CD8-positive, alpha-beta T cell (primary cell): ENCODE measurements at regions of chr2 and their contacts with region 1.

Region 1: GRCh38 chr2:84970868-84971509 is at the start of gene KCMF1:
- DNase-seq: peak; percentile 26 to 80 (median 69)
- ATAC-seq: peak; percentile 52
- H3K4me3 ChIP-seq: peak within 1 kb of the TSS; percentile 66 to 75
- H3K4me3 Mint-ChIP-seq: peak within 1 kb of the TSS; percentile 92
- H3K27ac ChIP-seq: peak within 1 kb of the TSS; percentile 74 to 78
- H3K27ac Mint-ChIP-seq: peak within 1 kb of the TSS; percentile 97
- H3K4me1 ChIP-seq: peaks cover 51% of the 10 kb centered on the region
- H3K4me1 Mint-ChIP-seq: peaks cover 61% of the 10 kb centered on the region
- H3K27me3 ChIP-seq: no peaks in the 10 kb centered on the region
- H3K27me3 Mint-ChIP-seq: no peaks in the 10 kb centered on the region
- CTCF ChIP-seq: no peak
- total RNA-seq, gene KCMF1: 85.3 to 89.5 TPM

Region 2: DNA sequence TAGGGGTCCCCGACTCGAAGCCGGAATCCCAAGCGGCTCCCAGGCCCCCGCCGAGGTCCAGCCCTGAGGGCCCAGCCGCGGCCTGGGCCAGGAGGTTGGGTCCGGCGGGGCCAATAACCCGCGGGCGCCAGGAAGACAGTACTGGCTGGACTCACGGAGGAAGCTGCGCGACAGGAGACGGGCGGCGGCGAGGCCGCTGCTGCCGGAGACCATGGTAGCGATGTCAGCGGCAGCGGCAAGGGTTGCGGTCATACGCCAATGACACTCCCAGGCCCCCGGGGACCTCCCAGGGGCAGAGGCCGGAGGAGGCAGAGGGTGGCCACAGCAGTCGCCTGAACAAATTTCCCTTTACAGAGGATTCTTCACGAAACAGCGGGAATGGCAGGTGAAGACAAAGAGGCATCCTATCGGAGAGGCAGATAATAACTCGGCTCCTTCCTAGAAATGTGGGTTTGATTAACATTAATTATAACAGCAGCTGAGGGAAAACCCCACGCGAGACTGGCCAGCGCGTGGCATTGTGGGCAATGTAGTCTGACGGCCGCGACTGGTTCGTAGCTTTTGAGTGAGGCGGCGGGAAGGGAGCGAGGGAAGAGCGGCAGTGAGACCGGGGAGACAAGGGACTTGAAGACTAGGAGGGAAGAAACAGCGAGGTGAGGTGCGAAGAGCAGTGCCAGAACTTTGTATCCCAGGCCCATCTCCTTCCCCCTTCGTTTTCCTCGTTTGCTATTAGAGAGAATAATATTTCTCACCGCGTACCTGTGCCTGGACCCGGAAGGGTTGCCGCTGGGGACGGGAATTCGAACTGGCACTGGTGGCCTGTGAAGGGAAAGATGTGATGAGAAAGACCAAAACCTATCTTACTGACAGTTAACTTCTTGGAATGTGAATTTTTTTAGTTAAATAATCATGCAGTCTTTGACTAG is 511.7 kb before region 1 on chr2 and contains the start of gene SUCLG1:
- CTCF ChIA-PET with region 1: no interaction called
- POLR2A ChIA-PET with region 1: no interaction called
- intact Hi-C with region 1: loop called in 1 of 2 experiments (anchors 1 kb)
- DNase-seq: peak; percentile 72 to 94 (median 87)
- ATAC-seq: peak; percentile 96
- H3K4me3 ChIP-seq: peak within 1 kb of the TSS; percentile 81 to 95
- H3K4me3 Mint-ChIP-seq: peak within 1 kb of the TSS; percentile 98
- H3K27ac ChIP-seq: peak within 1 kb of the TSS; percentile 78 to 97
- H3K27ac Mint-ChIP-seq: peak within 1 kb of the TSS; percentile 98
- H3K4me1 ChIP-seq: peaks cover 30% of the 10 kb centered on the region
- H3K4me1 Mint-ChIP-seq: peaks cover 46% of the 10 kb centered on the region
- H3K27me3 ChIP-seq: no peaks in the 10 kb centered on the region
- H3K27me3 Mint-ChIP-seq: no peaks in the 10 kb centered on the region
- CTCF ChIP-seq: no peak
- total RNA-seq, gene SUCLG1: 31.6 to 35.1 TPM

Region 3: GRCh38 chr2:84792856-84793522 is 178.0 kb before region 1 on chr2:
- CTCF ChIA-PET with region 1: no interaction called
- POLR2A ChIA-PET with region 1: no interaction called
- intact Hi-C with region 1: no loop called
- DNase-seq: no peak
- ATAC-seq: no peak
- H3K4me3 ChIP-seq: no peak overlapping the region
- H3K4me3 Mint-ChIP-seq: no peak overlapping the region
- H3K27ac ChIP-seq: no peak overlapping the region
- H3K27ac Mint-ChIP-seq: no peak overlapping the region
- H3K4me1 ChIP-seq: no peaks in the 10 kb centered on the region
- H3K4me1 Mint-ChIP-seq: peaks cover 9% of the 10 kb centered on the region
- H3K27me3 ChIP-seq: no peaks in the 10 kb centered on the region
- H3K27me3 Mint-ChIP-seq: no peaks in the 10 kb centered on the region
- CTCF ChIP-seq: no peak

Region 4: DNA sequence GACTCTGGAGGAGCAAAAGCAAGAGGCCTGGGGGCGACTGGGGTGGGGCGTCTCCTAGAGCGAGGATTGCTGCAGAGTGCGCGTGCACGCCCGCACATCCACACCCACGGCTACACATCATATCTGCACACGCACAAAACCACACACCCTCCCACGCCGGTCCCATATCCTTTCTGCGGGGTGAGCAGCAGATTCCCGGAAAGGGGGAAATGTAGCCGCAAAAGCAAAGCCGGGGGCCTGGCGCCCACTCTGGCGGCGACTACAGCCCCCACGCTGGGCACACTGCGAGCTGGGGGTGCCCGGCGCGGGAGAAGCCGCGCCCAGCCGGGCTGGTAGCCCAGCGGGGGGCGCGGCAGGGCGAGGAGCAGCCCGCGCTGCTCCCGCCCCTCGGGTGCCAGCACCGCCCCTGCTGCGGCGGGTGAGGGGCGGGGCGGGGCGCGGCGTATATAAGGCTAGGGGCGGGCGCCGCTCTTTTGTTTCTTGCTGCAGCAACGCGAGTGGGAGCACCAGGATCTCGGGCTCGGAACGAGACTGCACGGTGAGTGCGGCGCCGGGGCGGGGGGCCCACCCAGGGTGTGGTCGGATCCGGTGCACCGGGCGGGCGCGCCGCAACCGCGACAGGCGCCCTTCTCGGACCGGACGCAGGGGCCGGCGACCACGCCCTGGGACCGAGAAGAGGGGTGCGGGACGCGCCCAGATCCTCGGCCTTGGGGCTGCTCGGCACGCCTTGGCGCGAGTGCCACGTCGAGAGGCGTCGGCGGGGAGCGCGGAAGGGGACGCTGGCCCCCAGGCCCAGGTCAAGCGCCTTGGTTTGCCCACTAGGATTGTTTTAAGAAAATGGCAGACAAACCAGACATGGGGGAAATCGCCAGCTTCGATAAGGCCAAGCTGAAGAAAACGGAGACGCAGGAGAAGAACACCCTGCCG is 65.5 kb before region 1 on chr2 and contains the start of gene TMSB10:
- CTCF ChIA-PET with region 1: no interaction called
- POLR2A ChIA-PET with region 1: interaction called, 11 read pairs
- intact Hi-C with region 1: loop called in 1 of 2 experiments (anchors 2 kb)
- DNase-seq: peak; percentile 84 to 97 (median 91)
- ATAC-seq: peak; percentile 80
- H3K4me3 ChIP-seq: peak within 1 kb of the TSS; percentile 85 to 91
- H3K4me3 Mint-ChIP-seq: peak within 1 kb of the TSS; percentile 92
- H3K27ac ChIP-seq: peak within 1 kb of the TSS; percentile 68 to 80
- H3K27ac Mint-ChIP-seq: peak within 1 kb of the TSS; percentile 90
- H3K4me1 ChIP-seq: peaks cover 39% of the 10 kb centered on the region
- H3K4me1 Mint-ChIP-seq: peaks cover 59% of the 10 kb centered on the region
- H3K27me3 ChIP-seq: no peaks in the 10 kb centered on the region
- H3K27me3 Mint-ChIP-seq: no peaks in the 10 kb centered on the region
- CTCF ChIP-seq: no peak
- total RNA-seq, gene TMSB10: 1,479 to 1,577 TPM

Region 5: DNA sequence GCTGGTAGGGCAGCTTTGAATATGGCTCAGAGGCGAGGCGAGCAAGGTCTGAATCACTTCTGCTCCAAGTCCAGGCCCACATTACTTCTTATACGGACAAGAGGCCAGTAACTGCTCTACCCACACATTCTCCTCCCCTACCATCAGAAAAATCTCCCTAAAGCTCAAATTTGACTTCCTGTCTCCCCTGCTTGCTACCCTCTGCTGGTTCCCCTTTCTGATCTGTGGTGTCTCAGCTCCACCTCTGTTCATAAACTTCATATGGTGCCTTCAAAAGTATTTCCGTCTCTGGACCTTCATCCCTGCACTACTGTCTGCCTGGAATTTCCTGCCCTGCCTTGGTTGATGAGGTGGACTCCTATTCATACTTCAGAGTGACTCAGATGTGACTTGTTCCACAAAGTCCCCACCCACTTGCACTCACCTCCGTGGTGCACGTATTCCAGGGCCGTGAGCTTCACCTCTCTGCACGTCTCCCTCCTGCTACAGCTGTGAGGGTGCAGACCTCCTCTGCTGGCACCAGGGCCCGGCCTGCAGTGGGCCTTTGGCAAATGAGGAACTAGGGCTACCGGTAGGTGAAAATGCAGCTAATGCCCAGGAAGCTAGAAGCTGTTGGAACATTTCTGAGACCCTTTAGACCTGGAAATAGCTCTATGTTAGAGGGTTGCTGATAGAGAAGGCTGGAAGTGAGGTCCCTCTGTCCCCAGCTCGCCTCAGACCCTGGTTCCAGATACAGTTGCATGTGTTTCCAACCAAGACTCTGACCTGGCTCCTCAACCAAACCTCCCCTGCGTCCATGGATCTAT is 24.6 kb before region 1 on chr2:
- CTCF ChIA-PET with region 1: interaction called, 11 read pairs
- POLR2A ChIA-PET with region 1: interaction called, 28 read pairs
- intact Hi-C with region 1: loop called in 1 of 2 experiments (anchors 2 kb)
- DNase-seq: peak in 8 of 9 experiments; percentile 30 to 81 (median 62)
- ATAC-seq: peak; percentile 87
- H3K4me3 ChIP-seq: peak overlapping the region; percentile 20 to 27
- H3K4me3 Mint-ChIP-seq: peak overlapping the region; percentile 75
- H3K27ac ChIP-seq: peak overlapping the region; percentile 1 to 76
- H3K27ac Mint-ChIP-seq: peak overlapping the region; percentile 90
- H3K4me1 ChIP-seq: peaks cover 22% of the 10 kb centered on the region
- H3K4me1 Mint-ChIP-seq: peaks cover 24% of the 10 kb centered on the region
- H3K27me3 ChIP-seq: no peaks in the 10 kb centered on the region
- H3K27me3 Mint-ChIP-seq: no peaks in the 10 kb centered on the region
- CTCF ChIP-seq: no peak

Region 6: GRCh38 chr2:84999553-84999955 is 28.6 kb after region 1 on chr2:
- CTCF ChIA-PET with region 1: no interaction called
- POLR2A ChIA-PET with region 1: no interaction called
- intact Hi-C with region 1: no loop called
- DNase-seq: no peak
- ATAC-seq: no peak
- H3K4me3 ChIP-seq: no peak overlapping the region
- H3K4me3 Mint-ChIP-seq: no peak overlapping the region
- H3K27ac ChIP-seq: no peak overlapping the region
- H3K27ac Mint-ChIP-seq: no peak overlapping the region
- H3K4me1 ChIP-seq: peaks cover 19% of the 10 kb centered on the region
- H3K4me1 Mint-ChIP-seq: peaks cover 68% of the 10 kb centered on the region
- H3K27me3 ChIP-seq: no peaks in the 10 kb centered on the region
- H3K27me3 Mint-ChIP-seq: no peaks in the 10 kb centered on the region
- CTCF ChIP-seq: no peak

Region 7: GRCh38 chr2:85017411-85018048 is 46.5 kb after region 1 on chr2:
- CTCF ChIA-PET with region 1: interaction called, 4 read pairs
- POLR2A ChIA-PET with region 1: interaction called, 4 read pairs
- intact Hi-C with region 1: loop called in 1 of 2 experiments (anchors 2 kb)
- DNase-seq: peak in 2 of 9 experiments; percentile 23 to 39
- ATAC-seq: no peak
- H3K4me3 ChIP-seq: no peak overlapping the region
- H3K4me3 Mint-ChIP-seq: no peak overlapping the region
- H3K27ac ChIP-seq: no peak overlapping the region
- H3K27ac Mint-ChIP-seq: peak overlapping the region; percentile 64
- H3K4me1 ChIP-seq: peaks cover 15% of the 10 kb centered on the region
- H3K4me1 Mint-ChIP-seq: peaks cover 69% of the 10 kb centered on the region
- H3K27me3 ChIP-seq: no peaks in the 10 kb centered on the region
- H3K27me3 Mint-ChIP-seq: no peaks in the 10 kb centered on the region
- CTCF ChIP-seq: peak; percentile 56